ENCODE measurements at regions of chr1 and their contacts with region 1.

Region 1: GRCh38 chr1:9942939-9943788 is at the starts of genes LZIC and NMNAT1:
- DNase-seq: peak; percentile 96
- ATAC-seq: peak; percentile 95
- H3K4me3 ChIP-seq: peak within 1 kb of the TSS; percentile 67 to 98 (median 88)
- H3K4me3 Mint-ChIP-seq: peak within 1 kb of the TSS; percentile 95
- H3K27ac ChIP-seq: peak within 1 kb of the TSS; percentile 97
- H3K27ac Mint-ChIP-seq: peak within 1 kb of the TSS; percentile 97
- H3K4me1 ChIP-seq: peaks cover 14 to 27% of the 10 kb centered on the region in 2 donors
- H3K4me1 Mint-ChIP-seq: peaks cover 20% of the 10 kb centered on the region
- H3K27me3 ChIP-seq: no peaks in the 10 kb centered on the region
- H3K27me3 Mint-ChIP-seq: no peaks in the 10 kb centered on the region
- CTCF ChIP-seq: no peak
- total RNA-seq, gene LZIC: 21.5 and 26.0 TPM in 2 replicates
- total RNA-seq, gene NMNAT1: 8.0 and 8.9 TPM in 2 replicates

Region 2: GRCh38 chr1:9588551-9589143 is 354.5 kb before region 1 on chr1 and contains the start of gene TMEM201:
- CTCF ChIA-PET with region 1: no interaction called
- POLR2A ChIA-PET with region 1: no interaction called
- intact Hi-C with region 1: loop called (anchors 1 kb)
- DNase-seq: peak; percentile 96
- ATAC-seq: peak; percentile 91
- H3K4me3 ChIP-seq: peak within 1 kb of the TSS; percentile 33 to 62 (median 58)
- H3K4me3 Mint-ChIP-seq: peak within 1 kb of the TSS; percentile 91
- H3K27ac ChIP-seq: peak within 1 kb of the TSS in 1 of 2 donors; percentile 6
- H3K27ac Mint-ChIP-seq: peak within 1 kb of the TSS; percentile 82
- H3K4me1 ChIP-seq: peaks cover 33 to 42% of the 10 kb centered on the region in 2 donors
- H3K4me1 Mint-ChIP-seq: peaks cover 38% of the 10 kb centered on the region
- H3K27me3 ChIP-seq: no peaks in the 10 kb centered on the region
- H3K27me3 Mint-ChIP-seq: no peaks in the 10 kb centered on the region
- CTCF ChIP-seq: peak; percentile 80
- total RNA-seq, gene TMEM201: 9.1 and 11.2 TPM in 2 replicates

Region 3: GRCh38 chr1:9852410-9853248 is 90.5 kb before region 1 on chr1:
- CTCF ChIA-PET with region 1: interaction called, 3 read pairs
- POLR2A ChIA-PET with region 1: no interaction called
- intact Hi-C with region 1: loop called (anchors 1 kb)
- DNase-seq: no peak
- ATAC-seq: no peak
- H3K4me3 ChIP-seq: no peak overlapping the region
- H3K4me3 Mint-ChIP-seq: no peak overlapping the region
- H3K27ac ChIP-seq: no peak overlapping the region
- H3K27ac Mint-ChIP-seq: no peak overlapping the region
- H3K4me1 ChIP-seq: peaks cover 21 to 36% of the 10 kb centered on the region in 2 donors
- H3K4me1 Mint-ChIP-seq: peaks cover 26% of the 10 kb centered on the region
- H3K27me3 ChIP-seq: no peaks in the 10 kb centered on the region
- H3K27me3 Mint-ChIP-seq: no peaks in the 10 kb centered on the region
- CTCF ChIP-seq: no peak

Region 4: GRCh38 chr1:9874959-9875635 is 68.1 kb before region 1 on chr1:
- CTCF ChIA-PET with region 1: interaction called, 76 read pairs
- POLR2A ChIA-PET with region 1: no interaction called
- intact Hi-C with region 1: loop called (anchors 1 kb)
- DNase-seq: peak; percentile 86
- ATAC-seq: peak; percentile 98
- H3K4me3 ChIP-seq: no peak overlapping the region
- H3K4me3 Mint-ChIP-seq: no peak overlapping the region
- H3K27ac ChIP-seq: no peak overlapping the region
- H3K27ac Mint-ChIP-seq: no peak overlapping the region
- H3K4me1 ChIP-seq: peaks cover 0 to 9% of the 10 kb centered on the region in 2 donors
- H3K4me1 Mint-ChIP-seq: peaks cover 4% of the 10 kb centered on the region
- H3K27me3 ChIP-seq: no peaks in the 10 kb centered on the region
- H3K27me3 Mint-ChIP-seq: no peaks in the 10 kb centered on the region
- CTCF ChIP-seq: peak; percentile 95

Region 5: GRCh38 chr1:10032590-10033358 is 89.6 kb after region 1 on chr1 and contains the start of gene UBE4B:
- CTCF ChIA-PET with region 1: interaction called, 4 read pairs
- POLR2A ChIA-PET with region 1: interaction called, 6 read pairs
- intact Hi-C with region 1: loop called (anchors 1 kb)
- DNase-seq: peak; percentile 99
- ATAC-seq: peak; percentile 94
- H3K4me3 ChIP-seq: peak within 1 kb of the TSS; percentile 70 to 93 (median 89)
- H3K4me3 Mint-ChIP-seq: peak within 1 kb of the TSS; percentile 99
- H3K27ac ChIP-seq: peak within 1 kb of the TSS; percentile 73 to 84
- H3K27ac Mint-ChIP-seq: peak within 1 kb of the TSS; percentile 96
- H3K4me1 ChIP-seq: peaks cover 18 to 19% of the 10 kb centered on the region in 2 donors
- H3K4me1 Mint-ChIP-seq: peaks cover 23% of the 10 kb centered on the region
- H3K27me3 ChIP-seq: no peaks in the 10 kb centered on the region
- H3K27me3 Mint-ChIP-seq: no peaks in the 10 kb centered on the region
- CTCF ChIP-seq: peak; percentile 89
- total RNA-seq, gene UBE4B: 57.5 and 59.0 TPM in 2 replicates

Region 6: DNA sequence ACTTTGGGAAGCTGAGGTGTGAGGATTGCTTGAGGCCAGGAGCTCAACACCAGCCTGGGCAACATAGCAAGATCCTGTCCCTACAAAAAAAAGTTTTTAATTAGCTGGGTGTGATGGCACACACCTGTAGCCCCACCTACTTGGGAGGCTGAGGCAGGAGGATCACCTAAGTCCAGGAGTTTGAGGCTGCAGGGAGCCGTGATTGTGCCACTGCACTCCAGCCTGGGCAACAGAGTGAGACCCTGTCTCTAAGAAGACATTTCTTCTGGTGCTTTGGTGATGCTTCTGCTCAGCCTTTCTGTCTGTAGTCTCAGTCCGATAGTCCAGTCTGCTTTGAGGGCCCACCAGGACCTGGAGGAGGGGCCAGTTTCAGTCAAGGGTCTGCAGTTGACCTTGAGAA is 464.0 kb after region 1 on chr1:
- CTCF ChIA-PET with region 1: no interaction called
- POLR2A ChIA-PET with region 1: no interaction called
- intact Hi-C with region 1: no loop called
- DNase-seq: no peak
- ATAC-seq: no peak
- H3K4me3 ChIP-seq: no peak overlapping the region
- H3K4me3 Mint-ChIP-seq: no peak overlapping the region
- H3K27ac ChIP-seq: no peak overlapping the region
- H3K27ac Mint-ChIP-seq: no peak overlapping the region
- H3K4me1 ChIP-seq: no peaks in the 10 kb centered on the region
- H3K4me1 Mint-ChIP-seq: no peaks in the 10 kb centered on the region
- H3K27me3 ChIP-seq: no peaks in the 10 kb centered on the region
- H3K27me3 Mint-ChIP-seq: no peaks in the 10 kb centered on the region
- CTCF ChIP-seq: no peak

Region 7: DNA sequence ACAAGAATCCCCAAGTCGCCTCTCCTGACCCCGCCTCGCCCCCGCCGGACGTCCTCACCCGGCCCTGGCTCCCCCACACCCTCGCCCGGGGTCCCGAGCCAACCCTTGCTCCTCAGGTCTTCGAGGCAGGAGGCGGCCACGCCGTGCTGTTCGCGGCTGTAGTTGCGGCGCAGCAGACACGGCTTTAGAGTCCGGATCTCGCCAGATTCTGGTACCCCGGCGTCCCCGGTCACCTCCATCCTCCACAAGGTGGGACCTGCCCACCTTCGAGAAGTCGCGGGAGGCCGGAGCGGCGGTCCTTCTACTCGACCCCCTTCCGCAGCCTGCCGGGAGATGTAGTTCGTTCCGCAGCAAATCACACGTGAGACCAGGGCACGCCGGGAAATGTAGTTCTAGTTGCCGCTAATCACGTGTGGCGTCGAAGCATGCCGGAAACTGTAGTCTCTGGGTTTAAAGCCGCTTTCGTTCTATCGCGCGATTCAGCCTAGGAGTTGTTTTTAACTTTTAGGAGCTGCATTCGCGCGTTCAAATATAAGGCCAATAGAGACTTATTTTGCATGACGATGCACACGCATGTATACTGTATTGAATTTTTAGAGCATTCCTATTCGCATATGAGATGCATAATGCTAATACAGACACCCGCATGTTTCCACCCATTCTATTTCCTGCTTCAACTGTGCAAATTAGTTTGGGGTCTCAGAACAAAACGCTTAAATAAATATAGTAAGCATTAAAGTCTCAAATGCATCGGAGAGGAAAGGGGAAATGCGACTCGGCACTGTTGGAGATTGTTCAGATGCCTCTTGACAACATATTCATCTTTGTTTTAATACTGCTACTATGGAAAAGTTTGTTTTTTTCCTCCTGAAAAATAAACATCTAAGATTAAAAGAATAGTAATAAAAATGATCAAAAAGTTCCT is 529.3 kb after region 1 on chr1 and contains the start of gene DFFA:
- CTCF ChIA-PET with region 1: no interaction called
- POLR2A ChIA-PET with region 1: no interaction called
- intact Hi-C with region 1: loop called (anchors 5 kb)
- DNase-seq: peak; percentile 94
- ATAC-seq: peak; percentile 81
- H3K4me3 ChIP-seq: peak within 1 kb of the TSS; percentile 58 to 84 (median 80)
- H3K4me3 Mint-ChIP-seq: peak within 1 kb of the TSS; percentile 87
- H3K27ac ChIP-seq: peak within 1 kb of the TSS; percentile 38 to 74
- H3K27ac Mint-ChIP-seq: peak within 1 kb of the TSS; percentile 88
- H3K4me1 ChIP-seq: peaks cover 34 to 44% of the 10 kb centered on the region in 2 donors
- H3K4me1 Mint-ChIP-seq: peaks cover 46% of the 10 kb centered on the region
- H3K27me3 ChIP-seq: no peaks in the 10 kb centered on the region
- H3K27me3 Mint-ChIP-seq: no peaks in the 10 kb centered on the region
- CTCF ChIP-seq: no peak
- total RNA-seq, gene DFFA: 28.2 and 30.7 TPM in 2 replicates

Region 8: GRCh38 chr1:10507111-10507879 is 564.1 kb after region 1 on chr1:
- CTCF ChIA-PET with region 1: no interaction called
- POLR2A ChIA-PET with region 1: interaction called, 11 read pairs
- intact Hi-C with region 1: no loop called
- DNase-seq: peak; percentile 58
- ATAC-seq: peak; percentile 68
- H3K4me3 ChIP-seq: no peak overlapping the region
- H3K4me3 Mint-ChIP-seq: no peak overlapping the region
- H3K27ac ChIP-seq: peak overlapping the region in 1 of 2 donors; percentile 2
- H3K27ac Mint-ChIP-seq: peak overlapping the region; percentile 38
- H3K4me1 ChIP-seq: peaks cover 22 to 29% of the 10 kb centered on the region in 2 donors
- H3K4me1 Mint-ChIP-seq: peaks cover 38% of the 10 kb centered on the region
- H3K27me3 ChIP-seq: no peaks in the 10 kb centered on the region
- H3K27me3 Mint-ChIP-seq: no peaks in the 10 kb centered on the region
- CTCF ChIP-seq: peak; percentile 84